ENCODE measurements at regions of chr12 and their contacts with region 1.

Region 1: DNA sequence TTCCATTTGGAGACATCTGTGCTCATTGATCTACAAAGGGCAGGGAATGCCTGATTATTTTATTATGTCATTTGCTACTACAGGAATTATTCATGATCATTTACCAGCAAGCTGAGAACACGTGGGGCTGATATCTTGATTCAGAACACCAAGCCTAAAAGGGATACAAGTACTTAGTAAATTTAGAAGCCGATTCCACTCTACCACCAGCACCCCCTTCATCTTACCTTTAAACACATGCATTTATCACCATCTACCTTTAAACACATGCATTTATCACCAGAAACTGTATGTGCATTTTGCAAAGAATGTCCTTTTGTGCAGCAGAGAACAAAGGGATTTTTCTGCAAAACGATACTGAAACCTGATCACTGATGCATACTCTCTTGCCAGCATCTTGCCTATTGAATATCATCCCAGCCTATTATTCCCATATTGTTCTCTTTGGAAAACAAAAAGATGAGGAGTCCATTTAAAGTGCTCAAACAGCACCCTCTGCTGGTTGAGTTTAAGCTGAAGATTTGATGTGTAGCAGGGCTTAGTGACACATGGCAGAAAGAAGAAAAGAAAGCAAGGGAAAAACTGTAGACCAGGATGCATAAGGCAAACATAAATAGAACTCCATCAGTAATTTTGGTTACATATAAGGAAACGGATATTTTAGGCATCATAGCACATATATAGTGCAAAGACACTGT is 132.6 kb upstream of the PLEKHG7 start:
- DNase-seq: peak in 3 of 5 donors; percentile 48 to 71 (median 71)
- ATAC-seq: peak; percentile 47 to 89 (median 86)
- H3K4me3 ChIP-seq: no peak overlapping the region
- H3K27ac ChIP-seq: peak overlapping the region in 1 of 12 donors; percentile 59
- H3K4me1 ChIP-seq: peaks cover 0 to 47% (median 4%) of the 10 kb centered on the region in 12 donors
- H3K27me3 ChIP-seq: no peaks in the 10 kb centered on the region
- CTCF ChIP-seq: peak; percentile 71 to 93 (median 80)
- POLR2A ChIP-seq: no peak

Region 2: GRCh38 chr12:91382081-91382543 is 1188.1 kb before region 1 on chr12:
- intact Hi-C with region 1: loop called (anchors 1 to 10 kb)
- DNase-seq: peak; percentile 75 to 89 (median 84)
- ATAC-seq: peak; percentile 80 to 88 (median 84)
- H3K4me3 ChIP-seq: peak overlapping the region; percentile 4 to 61 (median 50)
- H3K27ac ChIP-seq: peak overlapping the region; percentile 37 to 86 (median 73)
- H3K4me1 ChIP-seq: peaks cover 0 to 6% (median 0%) of the 10 kb centered on the region in 12 donors
- H3K27me3 ChIP-seq: no peaks in the 10 kb centered on the region
- CTCF ChIP-seq: peak; percentile 81 to 97 (median 90)
- POLR2A ChIP-seq: no peak

Region 3: DNA sequence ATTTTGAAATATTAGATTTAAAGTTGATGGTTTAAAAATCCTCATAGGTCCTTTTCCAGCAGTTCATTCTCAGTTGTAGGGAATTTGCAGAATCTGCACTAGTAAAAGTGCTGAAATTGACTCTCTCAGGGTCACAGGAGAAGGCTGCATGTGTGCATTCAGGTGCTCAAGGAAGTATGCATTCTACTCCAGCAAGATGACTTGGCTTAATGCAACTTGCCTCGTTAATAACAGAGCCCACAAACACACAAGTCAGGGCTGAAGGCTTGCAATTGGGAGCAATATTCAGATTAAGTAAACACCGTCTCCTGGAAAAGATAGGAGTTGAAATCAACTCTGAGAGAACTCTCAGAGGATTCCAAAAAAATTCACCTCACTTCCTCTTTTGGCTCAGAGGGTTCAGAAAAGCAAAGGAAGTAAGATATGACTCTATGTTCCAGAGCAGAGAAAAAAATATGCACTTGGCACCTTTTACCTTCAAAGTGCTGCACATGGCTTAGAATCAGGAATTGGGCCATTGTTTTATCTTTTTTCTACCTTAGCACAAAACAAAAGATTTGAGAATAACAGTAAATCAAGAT is 981.2 kb before region 1 on chr12:
- intact Hi-C with region 1: loop called in 1 of 10 experiments (anchors 10 kb)
- DNase-seq: no peak
- ATAC-seq: peak in 3 of 4 donors; percentile 15 to 44 (median 33)
- H3K4me3 ChIP-seq: no peak overlapping the region
- H3K27ac ChIP-seq: peak overlapping the region in 1 of 12 donors; percentile 19
- H3K4me1 ChIP-seq: peaks cover 0 to 11% (median 4%) of the 10 kb centered on the region in 12 donors
- H3K27me3 ChIP-seq: no peaks in the 10 kb centered on the region
- CTCF ChIP-seq: no peak
- POLR2A ChIP-seq: no peak

Region 4: GRCh38 chr12:91811481-91812287 is 758.5 kb before region 1 on chr12:
- intact Hi-C with region 1: loop called (anchors 1 to 5 kb)
- DNase-seq: peak; percentile 56 to 77 (median 67)
- ATAC-seq: peak in 3 of 4 donors; percentile 61 to 76 (median 68)
- H3K4me3 ChIP-seq: no peak overlapping the region
- H3K27ac ChIP-seq: no peak overlapping the region
- H3K4me1 ChIP-seq: no peaks in the 10 kb centered on the region
- H3K27me3 ChIP-seq: no peaks in the 10 kb centered on the region
- CTCF ChIP-seq: peak; percentile 72 to 90 (median 82)
- POLR2A ChIP-seq: no peak

Region 5: DNA sequence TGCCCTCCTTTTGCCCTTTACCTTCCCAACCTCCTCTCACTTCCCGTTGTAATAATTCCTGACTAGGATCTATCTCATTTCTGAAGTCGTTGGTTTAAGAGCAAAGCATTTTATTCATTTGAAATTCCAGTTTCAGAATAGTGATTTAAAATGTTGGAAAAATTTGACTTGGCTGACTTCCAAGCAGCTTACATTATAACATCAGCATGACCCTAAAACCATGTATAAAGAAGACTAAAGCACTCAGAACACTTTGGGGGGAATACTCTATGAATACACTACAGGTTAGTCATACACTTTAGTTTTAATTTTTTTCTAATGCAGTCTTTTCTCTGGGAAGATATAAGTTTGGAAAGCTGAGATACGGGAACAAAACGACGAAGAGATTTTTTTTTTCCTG is 585.6 kb before region 1 on chr12:
- intact Hi-C with region 1: no loop called
- DNase-seq: no peak
- ATAC-seq: no peak
- H3K4me3 ChIP-seq: no peak overlapping the region
- H3K27ac ChIP-seq: peak overlapping the region in 2 of 12 donors; percentile 21 to 22
- H3K4me1 ChIP-seq: peaks cover 0 to 62% (median 32%) of the 10 kb centered on the region in 12 donors
- H3K27me3 ChIP-seq: no peaks in the 10 kb centered on the region
- CTCF ChIP-seq: no peak
- POLR2A ChIP-seq: no peak

Region 6: GRCh38 chr12:92244036-92244435 is 326.2 kb before region 1 on chr12:
- intact Hi-C with region 1: loop called in 5 of 10 experiments (anchors 2 to 10 kb)
- DNase-seq: peak in 2 of 5 donors; percentile 32 to 61
- ATAC-seq: peak; percentile 95 to 98 (median 96)
- H3K4me3 ChIP-seq: peak overlapping the region in 1 of 12 donors; percentile 23
- H3K27ac ChIP-seq: peak overlapping the region; percentile 48 to 78 (median 68)
- H3K4me1 ChIP-seq: peaks cover 5 to 25% (median 15%) of the 10 kb centered on the region in 12 donors
- H3K27me3 ChIP-seq: no peaks in the 10 kb centered on the region
- CTCF ChIP-seq: peak in 8 of 12 donors; percentile 22 to 54 (median 32)
- POLR2A ChIP-seq: no peak

Region 7: DNA sequence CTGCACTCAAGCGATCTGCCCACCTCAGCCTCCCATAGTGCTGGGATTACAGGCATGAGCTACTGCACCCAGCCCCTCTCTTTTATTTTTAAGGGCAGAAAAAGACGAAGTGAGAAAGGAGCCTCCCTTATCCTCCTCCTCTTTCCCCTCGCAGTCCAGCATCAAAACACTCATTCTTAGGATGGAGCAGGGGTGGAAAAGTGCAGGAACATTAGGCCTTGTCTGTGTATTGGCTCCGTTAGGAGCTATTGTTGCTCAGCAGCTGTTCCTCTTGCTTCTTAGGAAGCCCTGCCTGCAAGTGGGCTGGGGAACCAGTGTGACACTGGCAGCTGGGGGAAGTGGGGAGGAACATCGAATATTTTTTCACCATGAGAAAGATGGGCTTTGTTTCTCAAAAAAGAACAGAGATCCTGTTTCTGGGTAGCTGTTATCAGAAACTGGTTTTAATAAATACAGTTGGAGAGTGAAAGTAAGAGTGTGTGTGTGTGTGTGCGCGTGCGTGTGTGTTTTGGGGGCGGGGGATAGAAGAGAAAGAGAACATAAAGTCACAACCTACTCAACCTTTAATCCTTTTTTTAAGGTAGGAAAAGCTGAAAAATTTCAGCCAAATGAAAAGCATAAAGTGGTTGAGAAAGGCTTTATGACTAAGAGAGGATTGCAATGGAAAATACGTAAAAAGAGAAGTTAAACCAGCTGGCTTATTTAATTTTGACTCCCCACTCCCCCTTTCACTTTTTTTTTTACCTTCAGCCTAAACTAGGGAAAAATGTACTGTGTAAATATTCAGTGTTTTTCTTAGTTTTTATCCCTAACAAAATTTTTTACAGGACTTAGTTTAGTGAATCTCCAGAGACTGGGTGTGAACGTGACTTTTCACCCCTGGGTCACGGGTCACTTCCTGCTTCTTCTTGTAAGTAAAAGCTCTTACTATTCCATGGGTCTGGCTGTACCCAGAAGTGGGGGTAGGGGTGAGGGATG is 64.7 kb before region 1 on chr12:
- intact Hi-C with region 1: loop called in 5 of 10 experiments (anchors 2 to 10 kb)
- DNase-seq: peak; percentile 67 to 81 (median 70)
- ATAC-seq: peak; percentile 71 to 87 (median 80)
- H3K4me3 ChIP-seq: peak overlapping the region in 10 of 12 donors; percentile 11 to 40 (median 26)
- H3K27ac ChIP-seq: peak overlapping the region; percentile 55 to 96 (median 85)
- H3K4me1 ChIP-seq: peaks cover 5 to 59% (median 38%) of the 10 kb centered on the region in 12 donors
- H3K27me3 ChIP-seq: no peaks in the 10 kb centered on the region
- CTCF ChIP-seq: no peak
- POLR2A ChIP-seq: no peak

Measured in heart left ventricle (tissue), 16 donors.